ENCODE measurements at regions of chr7 and their contacts with region 1.

Region 1: GRCh38 chr7:113289140-113289740 is 170.9 kb upstream of the SMIM30 start:
- ATAC-seq: peak; percentile 71 to 94 (median 78)
- H3K4me3 ChIP-seq: no peak overlapping the region
- H3K27ac ChIP-seq: no peak overlapping the region
- H3K4me1 ChIP-seq: no peaks in the 10 kb centered on the region

Region 2: DNA sequence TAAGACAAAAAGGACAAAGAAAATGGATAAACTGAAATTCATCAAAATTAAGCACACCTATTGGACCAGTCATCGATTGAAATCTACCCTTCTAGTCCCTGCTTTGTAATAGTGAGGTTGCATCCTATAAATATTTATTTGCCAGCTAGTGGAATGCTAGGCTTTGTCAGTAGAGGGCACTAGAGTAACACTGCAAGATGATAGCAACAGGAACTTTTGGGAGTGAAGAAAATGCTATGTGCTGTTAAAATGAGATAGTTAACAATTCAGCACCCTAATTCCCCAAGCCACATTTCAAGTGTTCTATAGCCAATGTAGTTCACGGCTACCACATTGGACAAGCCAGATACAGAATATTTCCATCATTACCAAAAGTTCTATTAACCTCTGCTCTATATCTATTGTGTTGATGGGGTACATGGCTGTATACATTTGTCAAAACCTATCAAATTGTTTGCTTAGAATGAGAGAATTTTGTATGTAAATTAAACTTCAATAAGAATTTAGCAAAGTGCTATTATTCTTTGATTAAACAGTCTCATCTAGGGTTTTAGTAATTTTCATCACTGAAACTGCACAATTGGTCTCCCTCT is 738.7 kb before region 1 on chr7:
- in situ Hi-C with region 1: loop called in 1 of 9 experiments (anchors 25 kb)
- ATAC-seq: peak in 3 of 8 experiments; percentile 69 to 81 (median 78)
- H3K4me3 ChIP-seq: no peak overlapping the region
- H3K27ac ChIP-seq: no peak overlapping the region
- H3K4me1 ChIP-seq: no peaks in the 10 kb centered on the region

Region 3: GRCh38 chr7:113015032-113015645 is 274.1 kb before region 1 on chr7:
- in situ Hi-C with region 1: loop called in 2 of 9 experiments (anchors 25 kb)
- ATAC-seq: peak in 2 of 8 experiments; percentile 46 to 54
- H3K4me3 ChIP-seq: no peak overlapping the region
- H3K27ac ChIP-seq: no peak overlapping the region
- H3K4me1 ChIP-seq: peaks cover 0 to 7% of the 10 kb centered on the region in 2 donors

Region 4: DNA sequence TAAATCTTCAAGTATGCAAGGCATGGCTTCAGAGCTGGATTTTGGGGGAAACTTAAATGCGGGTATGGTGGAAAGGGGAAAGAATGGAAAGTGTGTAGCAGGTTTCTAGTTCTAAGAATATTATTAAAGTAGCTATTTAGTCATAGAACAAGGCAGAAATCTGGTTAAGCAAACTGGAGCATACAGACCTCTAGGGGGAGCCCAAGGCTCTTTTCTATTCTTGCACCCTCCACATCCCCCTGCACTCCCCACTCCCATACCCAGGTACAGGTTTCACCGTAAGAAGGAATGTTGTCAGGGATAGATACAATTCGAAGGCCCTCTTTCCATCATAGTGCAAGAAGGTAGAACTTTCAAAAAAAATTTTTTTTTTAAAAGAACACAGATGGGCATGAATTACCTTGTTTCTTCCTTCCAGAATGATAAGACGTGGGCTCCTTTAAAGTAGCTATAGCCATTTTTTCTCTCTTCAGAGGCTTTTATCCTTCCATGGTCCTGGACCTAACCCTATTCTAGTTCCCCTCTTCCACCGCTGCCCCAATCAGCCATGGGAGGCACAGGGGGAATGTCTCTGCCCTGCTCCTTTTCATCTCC is 129.4 kb before region 1 on chr7:
- in situ Hi-C with region 1: loop called in 1 of 9 experiments (anchors 25 kb)
- ATAC-seq: peak in 3 of 8 experiments; percentile 55 to 68 (median 67)
- H3K4me3 ChIP-seq: no peak overlapping the region
- H3K27ac ChIP-seq: no peak overlapping the region
- H3K4me1 ChIP-seq: peaks cover 0 to 1% of the 10 kb centered on the region in 2 donors

Region 5: GRCh38 chr7:113197274-113197673 is 92.0 kb before region 1 on chr7:
- in situ Hi-C with region 1: loop called in 1 of 9 experiments (anchors 25 kb)
- ATAC-seq: no peak
- H3K4me3 ChIP-seq: no peak overlapping the region
- H3K27ac ChIP-seq: no peak overlapping the region
- H3K4me1 ChIP-seq: no peaks in the 10 kb centered on the region